Sigmoid colon (tissue), 7 donors: ENCODE measurements at regions of chr12 and their contacts with region 1.

Region 1: DNA sequence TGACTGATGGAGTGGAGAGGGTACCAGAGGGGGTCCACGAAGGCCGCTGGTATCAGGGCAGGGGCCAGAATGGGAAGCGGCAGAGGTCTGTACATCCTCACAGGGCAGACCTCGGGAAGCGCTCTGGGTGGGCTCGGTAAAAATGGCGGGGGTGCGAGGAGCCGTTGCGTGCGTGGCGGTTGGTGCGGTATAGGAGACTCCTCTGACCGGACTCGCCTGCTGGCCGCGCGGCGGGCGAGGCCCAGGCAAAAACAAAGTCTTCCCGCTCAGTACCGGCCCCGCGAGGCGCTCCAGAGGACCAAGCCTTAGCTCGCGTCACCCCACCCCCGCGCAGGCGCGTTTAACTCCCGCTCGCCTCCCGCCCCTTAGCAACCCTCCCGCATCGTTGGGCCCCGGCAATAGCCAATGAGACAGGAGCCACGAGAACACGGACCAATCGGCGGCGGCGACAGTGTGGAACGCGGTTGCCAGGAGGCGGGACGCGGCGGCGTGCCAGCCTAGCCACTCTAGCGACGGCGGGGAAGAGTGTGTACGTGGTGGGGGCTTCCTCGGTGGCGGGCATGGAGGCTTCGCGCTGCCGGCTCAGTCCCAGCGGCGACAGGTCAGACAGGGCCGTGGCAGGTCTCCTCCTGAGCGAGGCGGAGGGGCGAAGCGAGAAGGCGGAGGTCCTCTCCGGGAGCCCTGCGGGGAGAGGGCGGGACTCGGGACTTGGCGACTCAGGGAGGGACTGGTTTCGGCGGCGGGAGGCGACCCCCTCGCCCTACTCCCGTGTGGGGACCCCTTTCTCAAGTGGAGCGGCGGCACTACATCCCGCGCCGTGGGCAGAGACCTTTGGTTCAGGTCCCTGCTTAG is at the start of gene TULP3:
- DNase-seq: peak; percentile 100
- H3K4me3 ChIP-seq: peak within 1 kb of the TSS; percentile 60 to 96 (median 66)
- H3K27ac ChIP-seq: peak within 1 kb of the TSS; percentile 87 to 100 (median 94)
- H3K4me1 ChIP-seq: peaks cover 0 to 44% (median 40%) of the 10 kb centered on the region in 4 donors
- H3K27me3 ChIP-seq: no peaks in the 10 kb centered on the region
- CTCF ChIP-seq: no peak
- EP300 ChIP-seq: no peak
- POLR2A ChIP-seq: peak; percentile 82 to 88
- total RNA-seq, gene TULP3: 17.8 to 32.1 (median 24.8) TPM

Region 2: GRCh38 chr12:2586156-2587045 is 304.2 kb before region 1 on chr12:
- intact Hi-C with region 1: no loop called
- DNase-seq: no peak
- H3K4me3 ChIP-seq: no peak overlapping the region
- H3K27ac ChIP-seq: no peak overlapping the region
- H3K4me1 ChIP-seq: peaks cover 0 to 17% (median 14%) of the 10 kb centered on the region in 4 donors
- H3K27me3 ChIP-seq: no peaks in the 10 kb centered on the region
- CTCF ChIP-seq: no peak
- EP300 ChIP-seq: no peak
- POLR2A ChIP-seq: no peak

Region 3: DNA sequence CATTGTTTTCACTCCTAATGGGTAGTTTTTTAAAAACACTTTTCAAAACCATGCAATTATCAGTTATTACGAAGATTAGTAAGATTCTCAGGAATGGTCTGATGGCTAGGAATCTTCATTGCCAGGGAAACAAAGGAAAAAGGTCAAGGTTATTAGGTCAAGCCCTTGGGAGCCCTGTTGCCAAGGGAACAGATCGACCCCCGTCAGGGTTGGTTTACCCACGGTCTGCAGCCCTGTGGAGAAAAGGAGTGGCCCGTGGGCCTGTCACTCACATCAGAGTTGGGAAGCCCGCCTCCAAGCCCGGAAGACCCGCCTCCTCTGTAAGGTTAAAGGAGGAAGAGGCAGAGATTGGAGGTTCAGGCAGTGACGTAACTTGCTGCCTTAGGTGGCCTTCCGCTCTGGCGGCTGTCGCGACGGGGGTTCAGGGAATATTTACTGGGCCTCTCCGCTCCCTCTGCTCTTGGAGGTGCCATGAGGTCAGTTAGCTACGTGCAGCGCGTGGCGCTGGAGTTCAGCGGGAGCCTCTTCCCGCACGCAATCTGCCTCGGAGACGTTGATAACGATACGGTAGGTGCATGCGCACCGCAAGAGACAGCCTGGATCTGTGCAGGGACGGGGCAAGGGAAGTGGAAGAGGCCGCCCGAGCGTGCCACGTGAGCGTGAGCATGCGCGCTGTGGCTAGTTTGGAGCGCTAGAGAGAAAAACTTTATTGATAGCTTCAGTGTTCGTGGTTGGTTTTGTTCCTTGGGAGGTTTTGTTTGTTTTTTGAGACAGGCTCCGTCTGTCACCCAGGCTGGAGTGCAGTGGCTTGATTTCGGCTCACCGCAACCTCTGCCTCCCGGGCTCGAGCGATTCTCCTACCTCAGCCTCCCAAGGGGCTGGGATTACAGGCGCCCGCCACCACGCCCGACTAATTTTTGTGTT is 78.1 kb before region 1 on chr12 and contains the start of gene ITFG2:
- intact Hi-C with region 1: loop called (anchors 5 kb)
- DNase-seq: peak; percentile 99
- H3K4me3 ChIP-seq: peak within 1 kb of the TSS; percentile 70 to 85 (median 75)
- H3K27ac ChIP-seq: peak within 1 kb of the TSS; percentile 92 to 96 (median 94)
- H3K4me1 ChIP-seq: peaks cover 0 to 23% (median 18%) of the 10 kb centered on the region in 4 donors
- H3K27me3 ChIP-seq: no peaks in the 10 kb centered on the region
- CTCF ChIP-seq: no peak
- EP300 ChIP-seq: peak in 1 of 4 donors; percentile 9
- POLR2A ChIP-seq: peak; percentile 43 to 92
- total RNA-seq, gene ITFG2: 20.6 to 31.9 (median 25.6) TPM

Region 4: DNA sequence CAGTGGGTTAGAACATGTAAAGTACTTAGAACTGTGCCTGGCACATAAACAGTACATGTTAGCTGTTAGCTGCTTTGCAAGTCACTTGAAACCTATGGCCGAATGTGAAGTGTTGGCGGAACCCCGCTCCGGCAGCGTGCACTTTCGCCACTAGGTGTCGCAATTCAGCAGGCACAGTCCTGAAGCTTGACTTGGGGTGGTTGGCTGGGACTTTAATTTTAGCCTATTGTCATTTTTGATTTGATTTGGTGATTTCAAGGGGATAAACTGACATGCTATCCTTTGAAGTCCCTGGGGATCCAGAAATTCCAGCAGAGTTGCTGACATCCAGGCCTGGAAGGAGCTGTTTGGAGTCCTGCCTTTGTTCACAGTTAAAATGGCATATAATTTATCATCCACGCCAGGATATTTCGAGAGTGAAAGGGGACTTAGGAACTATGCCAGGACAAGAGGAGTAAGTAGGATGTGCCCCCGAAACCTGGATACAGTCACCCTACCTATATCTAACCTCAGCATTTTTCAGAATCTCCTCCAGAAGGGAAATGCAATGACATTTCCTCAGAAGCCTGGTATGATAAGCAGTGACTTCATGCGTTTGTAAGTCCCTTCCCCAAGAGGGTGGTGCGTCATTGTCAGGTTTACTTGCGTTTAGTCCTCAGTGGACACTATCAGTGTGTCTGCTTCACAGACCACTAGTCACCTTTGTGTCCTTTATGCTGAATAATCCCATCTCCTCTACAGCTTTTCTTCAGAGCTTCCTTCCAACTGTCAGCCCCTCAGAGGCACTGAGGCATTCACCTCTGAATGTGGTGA is 183.0 kb after region 1 on chr12:
- intact Hi-C with region 1: no loop called
- DNase-seq: peak; percentile 89
- H3K4me3 ChIP-seq: no peak overlapping the region
- H3K27ac ChIP-seq: peak overlapping the region in 2 of 4 donors; percentile 15 to 41
- H3K4me1 ChIP-seq: peaks cover 0 to 42% (median 35%) of the 10 kb centered on the region in 4 donors
- H3K27me3 ChIP-seq: no peaks in the 10 kb centered on the region
- CTCF ChIP-seq: peak; percentile 78 to 96 (median 92)
- EP300 ChIP-seq: no peak
- POLR2A ChIP-seq: no peak

Region 5: DNA sequence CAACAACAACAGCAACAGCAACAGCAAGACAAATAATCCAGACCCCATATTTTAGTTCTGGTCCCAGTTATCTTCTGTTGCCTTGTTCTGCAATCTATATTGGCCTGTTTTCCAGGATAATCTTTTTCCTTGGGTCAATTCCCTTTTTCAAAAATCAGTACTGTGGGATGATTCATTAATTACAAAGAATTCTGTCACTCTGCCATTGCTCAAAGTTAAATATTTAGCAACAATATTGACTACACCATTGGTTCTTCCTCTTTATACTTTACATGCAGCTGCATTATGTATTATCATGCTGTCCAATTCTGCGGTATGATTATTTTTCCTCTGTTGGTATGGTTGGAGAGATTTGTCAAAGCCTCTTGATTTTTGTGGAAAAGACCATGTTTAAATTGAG is 1819.5 kb after region 1 on chr12:
- intact Hi-C with region 1: no loop called
- DNase-seq: no peak
- H3K4me3 ChIP-seq: no peak overlapping the region
- H3K27ac ChIP-seq: no peak overlapping the region
- H3K4me1 ChIP-seq: no peaks in the 10 kb centered on the region
- H3K27me3 ChIP-seq: no peaks in the 10 kb centered on the region
- CTCF ChIP-seq: no peak
- EP300 ChIP-seq: no peak
- POLR2A ChIP-seq: no peak